Psoas muscle (tissue), 8 donors: ENCODE measurements at regions of chr13 and their contacts with region 1.

Region 1: DNA sequence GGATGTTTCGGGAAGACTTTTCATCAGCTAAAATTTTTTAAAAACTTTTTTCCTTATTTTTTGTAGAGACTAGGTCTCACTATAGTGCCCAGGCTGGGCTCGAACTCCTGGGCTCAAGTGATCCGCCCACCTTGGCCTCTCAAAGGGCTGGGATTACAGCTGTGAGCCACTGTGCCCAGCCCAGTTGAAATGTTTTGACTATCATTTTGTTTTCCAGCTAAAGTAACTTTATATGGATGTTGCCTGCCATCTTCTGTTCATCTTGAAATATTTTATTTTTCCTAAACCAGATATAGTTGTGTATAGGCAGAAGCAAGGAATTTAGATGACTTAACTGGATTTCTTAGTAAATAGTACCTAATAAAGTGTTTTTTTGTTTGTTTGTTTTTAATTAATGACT is 7.0 kb downstream of the CAB39L start:
- DNase-seq: peak; percentile 54 to 67
- ATAC-seq: peak; percentile 17 to 63 (median 52)
- H3K4me3 ChIP-seq: no peak overlapping the region
- H3K27ac ChIP-seq: no peak overlapping the region
- H3K4me1 ChIP-seq: no peaks in the 10 kb centered on the region
- H3K27me3 ChIP-seq: no peaks in the 10 kb centered on the region
- CTCF ChIP-seq: no peak

Region 2: DNA sequence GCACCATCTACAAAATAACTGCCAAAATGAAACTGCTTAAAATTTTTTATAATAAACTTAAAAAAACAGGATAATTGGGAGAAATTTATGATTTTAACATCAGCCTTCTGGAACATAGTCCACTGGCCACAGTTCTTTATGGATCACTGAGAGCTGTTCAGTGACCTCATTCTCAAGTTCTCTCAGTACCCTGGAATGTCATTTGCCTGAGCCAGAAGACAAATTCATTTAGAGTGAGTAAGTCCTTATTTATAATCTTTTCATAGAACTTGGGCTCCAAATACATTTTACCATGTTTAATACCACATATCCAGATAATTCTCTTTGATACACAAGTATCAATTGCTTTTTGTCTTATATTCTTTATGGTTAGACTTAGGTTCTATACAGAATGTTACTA is 80.7 kb before region 1 on chr13:
- intact Hi-C with region 1: no loop called
- DNase-seq: no peak
- ATAC-seq: peak; percentile 82 to 94 (median 87)
- H3K4me3 ChIP-seq: no peak overlapping the region
- H3K27ac ChIP-seq: peak overlapping the region; percentile 54
- H3K4me1 ChIP-seq: peaks cover 10% of the 10 kb centered on the region
- H3K27me3 ChIP-seq: no peaks in the 10 kb centered on the region
- CTCF ChIP-seq: no peak

Region 3: GRCh38 chr13:49400755-49401659 is 35.9 kb before region 1 on chr13:
- intact Hi-C with region 1: no loop called
- DNase-seq: no peak
- ATAC-seq: peak in 2 of 4 donors; percentile 54 to 65
- H3K4me3 ChIP-seq: peak overlapping the region; percentile 51
- H3K27ac ChIP-seq: peak overlapping the region; percentile 61
- H3K4me1 ChIP-seq: peaks cover 3% of the 10 kb centered on the region
- H3K27me3 ChIP-seq: no peaks in the 10 kb centered on the region
- CTCF ChIP-seq: no peak

Region 4: DNA sequence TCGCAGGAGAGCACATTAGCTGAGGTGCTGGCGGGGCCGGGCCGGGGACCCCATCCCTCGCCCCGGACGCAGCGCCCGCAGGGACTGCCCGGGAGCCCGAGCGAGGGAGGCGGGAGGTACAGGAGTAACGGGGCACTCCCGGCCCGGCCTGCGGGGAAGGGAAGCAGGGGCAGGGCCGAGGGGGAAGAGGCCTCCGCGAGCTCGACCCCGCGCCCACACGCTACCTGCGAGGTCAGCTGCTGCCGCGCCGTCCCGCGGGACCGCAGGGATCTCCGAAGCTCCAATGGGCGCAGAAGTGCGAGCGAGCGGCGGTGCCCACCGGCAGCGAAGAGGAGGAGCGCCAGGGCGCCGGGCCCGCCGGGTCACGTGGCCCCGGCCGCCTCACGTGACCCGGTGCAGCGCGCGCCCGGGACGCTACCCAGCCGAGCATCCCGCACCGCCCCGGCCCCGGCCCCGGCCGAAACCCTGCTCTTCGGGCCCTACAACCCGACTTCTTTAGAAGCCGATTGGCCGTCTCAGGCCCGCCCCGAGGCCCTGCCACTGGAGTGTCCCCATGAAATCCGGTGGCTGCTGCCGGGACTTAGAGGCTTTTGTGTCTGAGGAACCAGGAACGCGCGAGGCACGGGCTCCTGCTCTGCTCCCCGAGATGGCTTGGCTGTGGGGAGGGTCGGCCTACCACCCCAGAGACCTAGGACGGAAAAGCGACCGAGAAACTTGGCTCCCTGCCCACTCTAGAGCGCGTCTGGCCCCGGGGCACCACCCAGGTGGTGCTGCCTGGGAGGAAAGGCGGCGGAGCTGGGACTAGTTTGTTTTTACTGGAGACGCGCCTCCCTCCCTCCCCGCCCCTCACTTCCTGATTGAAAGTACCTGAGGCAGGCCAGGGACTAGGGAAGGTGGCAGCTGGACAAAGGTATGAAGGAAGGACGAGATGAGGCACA is 148.6 kb after region 1 on chr13 and contains the start of gene RCBTB1:
- intact Hi-C with region 1: loop called in 1 of 2 experiments (anchors 10 kb)
- DNase-seq: peak; percentile 70 to 79
- ATAC-seq: peak; percentile 97 to 99 (median 98)
- H3K4me3 ChIP-seq: peak within 1 kb of the TSS; percentile 95
- H3K27ac ChIP-seq: peak within 1 kb of the TSS; percentile 67
- H3K4me1 ChIP-seq: peaks cover 9% of the 10 kb centered on the region
- H3K27me3 ChIP-seq: no peaks in the 10 kb centered on the region
- CTCF ChIP-seq: no peak
- total RNA-seq, gene RCBTB1: 5.3 to 8.5 (median 7.4) TPM